ENCODE measurements at regions of chr9 and their contacts with region 1.

Region 1: GRCh38 chr9:27353474-27354229 is 56.7 kb upstream of the EQTN start:
- DNase-seq: no peak
- H3K4me3 ChIP-seq: no peak overlapping the region
- H3K27ac ChIP-seq: peak overlapping the region; percentile 31 to 58
- H3K4me1 ChIP-seq: peaks cover 0 to 28% of the 10 kb centered on the region in 2 donors
- H3K27me3 ChIP-seq: no peaks in the 10 kb centered on the region
- CTCF ChIP-seq: no peak

Region 2: DNA sequence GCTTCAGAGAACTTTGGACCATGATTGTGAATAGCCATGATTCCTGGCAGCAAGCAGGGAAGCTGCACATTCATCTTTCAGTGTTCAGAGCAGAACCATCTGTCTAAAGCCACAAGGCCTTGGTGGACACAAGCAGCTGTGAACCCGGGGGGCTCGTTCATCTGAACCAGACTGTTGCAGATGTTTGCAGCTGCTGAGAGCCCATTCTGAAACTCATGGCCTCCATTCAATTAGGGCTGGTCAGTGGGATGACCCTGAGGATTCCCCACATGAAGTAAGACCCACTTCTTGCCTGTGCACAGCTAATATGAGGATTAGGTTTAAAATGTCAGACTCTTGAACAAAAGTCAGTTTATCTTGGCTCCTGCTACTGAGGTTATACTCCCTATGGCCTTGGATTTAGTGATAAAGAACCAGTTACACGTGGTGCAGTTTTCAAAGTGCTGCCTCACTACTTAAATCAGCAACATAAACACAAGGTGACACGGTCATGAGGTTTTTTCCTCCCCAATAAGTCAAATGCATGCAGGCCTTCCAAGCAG is 60.6 kb after region 1 on chr9:
- intact Hi-C with region 1: loop called (anchors 5 kb)
- DNase-seq: no peak
- H3K4me3 ChIP-seq: peak overlapping the region in 1 of 2 donors; percentile 54
- H3K27ac ChIP-seq: peak overlapping the region; percentile 49 to 63
- H3K4me1 ChIP-seq: peaks cover 0 to 12% of the 10 kb centered on the region in 2 donors
- H3K27me3 ChIP-seq: no peaks in the 10 kb centered on the region
- CTCF ChIP-seq: no peak